ENCODE measurements at regions of chr7 and their contacts with region 1.

Region 1: GRCh38 chr7:139340037-139340807 is 915 bp upstream of the FMC1 start:
- DNase-seq: peak; percentile 96 to 99
- ATAC-seq: peak; percentile 80 to 85 (median 82)
- H3K4me3 ChIP-seq: peak overlapping the region; percentile 89
- H3K27ac ChIP-seq: peak overlapping the region; percentile 98
- H3K4me1 ChIP-seq: peaks cover 11% of the 10 kb centered on the region
- H3K27me3 ChIP-seq: no peaks in the 10 kb centered on the region
- CTCF ChIP-seq: peak; percentile 69

Region 2: DNA sequence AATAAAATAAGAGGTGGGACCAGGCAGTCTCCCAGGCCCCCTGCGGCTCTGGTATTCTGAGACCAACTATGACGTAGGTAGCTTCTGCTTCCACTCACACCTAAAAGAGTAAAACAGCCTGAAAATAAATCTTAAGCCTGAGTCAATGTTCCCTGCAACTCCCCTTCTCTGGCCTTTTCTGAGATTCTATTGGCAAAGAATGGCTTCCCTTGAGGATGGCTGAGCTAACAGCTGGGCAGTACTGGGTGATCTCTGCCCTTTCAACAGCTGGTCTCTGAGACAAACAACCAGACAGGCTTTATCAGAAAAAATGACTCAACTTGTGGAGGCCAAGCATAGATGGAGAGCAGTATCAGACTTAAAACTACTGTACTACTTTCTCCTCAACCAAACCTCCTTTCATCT is 1397.1 kb before region 1 on chr7:
- intact Hi-C with region 1: loop called in 1 of 2 experiments (anchors 10 kb)
- DNase-seq: peak in 1 of 2 donors; percentile 39
- ATAC-seq: peak; percentile 46 to 83 (median 73)
- H3K4me3 ChIP-seq: no peak overlapping the region
- H3K27ac ChIP-seq: peak overlapping the region; percentile 51
- H3K4me1 ChIP-seq: peaks cover 22% of the 10 kb centered on the region
- H3K27me3 ChIP-seq: no peaks in the 10 kb centered on the region
- CTCF ChIP-seq: no peak

Region 3: GRCh38 chr7:139230774-139231512 is 109.3 kb before region 1 on chr7 and contains the start of gene UBN2:
- intact Hi-C with region 1: loop called in 1 of 2 experiments (anchors 5 kb)
- DNase-seq: peak; percentile 96 to 98
- ATAC-seq: peak; percentile 97 to 99 (median 98)
- H3K4me3 ChIP-seq: peak within 1 kb of the TSS; percentile 99
- H3K27ac ChIP-seq: peak within 1 kb of the TSS; percentile 98
- H3K4me1 ChIP-seq: peaks cover 22% of the 10 kb centered on the region
- H3K27me3 ChIP-seq: no peaks in the 10 kb centered on the region
- CTCF ChIP-seq: no peak
- total RNA-seq, gene UBN2: 20.6 to 30.1 (median 24.9) TPM

Region 4: DNA sequence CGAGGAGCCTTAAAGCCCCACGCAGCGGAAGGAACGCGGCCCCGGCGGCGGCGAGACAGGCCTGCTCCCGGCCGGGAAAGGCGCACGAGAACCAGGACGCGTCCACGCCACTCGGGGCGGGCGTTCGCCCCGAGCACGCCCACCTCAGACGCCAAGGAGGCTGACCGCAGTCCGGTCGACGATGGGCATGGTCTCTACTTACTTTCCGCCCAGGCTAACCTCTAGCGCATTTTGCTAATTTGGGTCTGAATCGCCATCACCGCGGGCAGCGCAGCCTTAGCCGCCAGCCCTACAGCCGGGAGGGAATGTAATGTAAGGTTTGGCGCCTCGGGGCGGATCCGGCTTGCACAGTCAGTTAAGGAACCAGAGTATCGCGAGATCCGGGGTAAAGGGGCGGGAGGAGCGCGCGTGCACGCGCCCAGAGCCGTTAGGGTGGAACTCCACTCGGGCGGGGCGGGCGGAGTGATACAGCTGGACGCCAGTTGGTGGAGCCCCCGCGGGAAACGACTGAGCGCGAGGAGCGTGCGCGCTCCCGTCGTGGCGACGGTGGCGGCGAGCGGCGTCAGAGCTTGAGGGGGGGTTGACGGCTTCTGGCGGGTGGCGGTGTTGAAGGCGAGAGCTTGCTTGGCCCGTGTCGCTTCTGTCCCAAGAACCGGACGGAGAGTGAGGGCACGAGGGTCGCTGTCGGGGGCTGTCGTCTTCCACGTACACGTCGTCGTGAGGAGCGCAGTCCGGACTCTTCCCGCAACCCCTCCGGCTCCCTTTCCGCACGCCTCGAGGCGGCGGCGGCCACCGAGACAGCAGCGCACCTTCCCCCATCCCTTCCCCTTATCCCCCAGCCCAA is 19.4 kb after region 1 on chr7 and contains the start of gene LUC7L2:
- intact Hi-C with region 1: loop called (anchors 1 to 2 kb)
- DNase-seq: peak; percentile 100
- ATAC-seq: peak; percentile 92 to 95 (median 94)
- H3K4me3 ChIP-seq: peak within 1 kb of the TSS; percentile 94
- H3K27ac ChIP-seq: peak within 1 kb of the TSS; percentile 97
- H3K4me1 ChIP-seq: peaks cover 30% of the 10 kb centered on the region
- H3K27me3 ChIP-seq: no peaks in the 10 kb centered on the region
- CTCF ChIP-seq: no peak
- total RNA-seq, gene LUC7L2: 44.4 to 67.5 (median 53.5) TPM